Mammary epithelial cell (primary cell): ENCODE measurements at regions of chr11 and their contacts with region 1.

Region 1: DNA sequence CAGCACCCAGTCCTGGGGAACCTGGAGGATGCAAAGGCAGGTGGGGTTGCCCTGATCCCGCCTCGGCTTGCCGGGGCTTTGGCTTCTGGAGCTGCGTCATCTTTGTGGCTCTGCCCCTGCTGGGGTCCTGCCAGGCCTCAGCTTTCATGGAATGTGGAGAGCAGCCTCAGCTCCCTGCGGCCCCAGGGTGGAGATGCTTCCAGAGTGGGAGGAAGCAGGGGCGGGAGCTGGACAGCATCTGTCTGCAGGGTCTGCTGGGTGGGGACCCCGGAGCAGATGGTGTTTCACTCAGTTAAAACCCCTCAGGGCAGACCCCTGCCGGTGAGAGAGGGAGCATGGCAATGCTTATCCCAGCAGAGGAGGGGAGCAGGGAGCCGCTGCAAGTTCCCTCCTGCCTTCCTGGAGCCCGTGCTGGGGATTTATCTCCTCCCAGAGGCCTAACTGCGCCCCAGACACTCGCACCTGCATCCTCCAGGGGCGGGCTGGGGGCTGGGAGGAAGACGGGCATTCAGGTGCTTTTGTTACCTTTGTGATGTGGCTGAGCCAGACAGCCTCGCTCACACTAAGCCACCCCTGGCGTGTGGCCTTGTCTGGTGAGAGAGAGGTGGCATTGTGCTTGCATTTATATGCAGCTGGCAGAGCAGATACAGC is 15.7 kb downstream of the GRIK4 start:
- DNase-seq: no peak
- H3K4me3 ChIP-seq: no peak overlapping the region
- H3K27ac ChIP-seq: no peak overlapping the region
- H3K4me1 ChIP-seq: no peaks in the 10 kb centered on the region
- H3K27me3 ChIP-seq: peaks cover 4% of the 10 kb centered on the region
- CTCF ChIP-seq: no peak

Region 2: GRCh38 chr11:120363436-120363835 is 163.8 kb before region 1 on chr11:
- CTCF ChIA-PET with region 1: no interaction called
- dilution Hi-C with region 1: no loop called
- in situ Hi-C with region 1: no loop called
- intact Hi-C with region 1: no loop called
- DNase-seq: no peak
- H3K4me3 ChIP-seq: no peak overlapping the region
- H3K27ac ChIP-seq: no peak overlapping the region
- H3K4me1 ChIP-seq: no peaks in the 10 kb centered on the region
- H3K27me3 ChIP-seq: no peaks in the 10 kb centered on the region
- CTCF ChIP-seq: no peak

Region 3: DNA sequence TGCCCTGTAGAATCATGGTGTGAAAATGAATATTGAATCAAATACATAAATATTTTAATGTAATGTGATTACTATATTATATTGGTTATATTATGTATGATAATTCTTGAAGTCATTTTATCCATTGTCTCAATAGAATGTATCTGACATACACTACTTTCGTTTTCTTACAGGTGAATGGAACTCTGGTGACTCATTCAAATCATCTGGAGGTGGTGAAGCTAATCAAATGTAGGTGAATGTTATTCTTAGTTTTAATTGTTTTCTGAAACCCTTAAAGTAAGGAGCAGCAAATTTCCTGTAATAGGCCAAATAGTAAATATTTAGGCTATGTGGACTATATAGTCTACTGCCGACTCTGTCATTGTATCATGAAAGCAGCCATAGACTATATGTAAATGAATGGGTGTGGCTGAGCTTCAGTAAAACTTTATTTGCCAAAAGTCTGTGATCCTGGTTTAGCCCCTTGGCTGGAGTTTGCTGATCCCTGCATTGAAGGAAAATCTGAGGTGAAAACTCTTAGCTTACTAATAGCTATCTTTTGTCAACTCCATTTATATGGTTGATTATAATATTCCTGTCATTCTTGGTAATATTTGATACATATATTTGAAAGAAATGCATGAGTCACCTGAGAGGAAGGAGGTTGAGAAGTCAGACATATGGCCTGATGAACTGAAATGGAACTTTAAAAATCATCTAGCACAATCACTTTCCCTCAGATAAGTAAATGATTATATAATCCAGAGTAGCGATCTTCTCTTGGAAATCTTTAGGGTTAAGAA is 102.9 kb before region 1 on chr11:
- CTCF ChIA-PET with region 1: no interaction called
- dilution Hi-C with region 1: no loop called
- in situ Hi-C with region 1: no loop called
- intact Hi-C with region 1: no loop called
- DNase-seq: peak; percentile 26
- H3K4me3 ChIP-seq: no peak overlapping the region
- H3K27ac ChIP-seq: no peak overlapping the region
- H3K4me1 ChIP-seq: peaks cover 10% of the 10 kb centered on the region
- H3K27me3 ChIP-seq: no peaks in the 10 kb centered on the region
- CTCF ChIP-seq: no peak

Region 4: DNA sequence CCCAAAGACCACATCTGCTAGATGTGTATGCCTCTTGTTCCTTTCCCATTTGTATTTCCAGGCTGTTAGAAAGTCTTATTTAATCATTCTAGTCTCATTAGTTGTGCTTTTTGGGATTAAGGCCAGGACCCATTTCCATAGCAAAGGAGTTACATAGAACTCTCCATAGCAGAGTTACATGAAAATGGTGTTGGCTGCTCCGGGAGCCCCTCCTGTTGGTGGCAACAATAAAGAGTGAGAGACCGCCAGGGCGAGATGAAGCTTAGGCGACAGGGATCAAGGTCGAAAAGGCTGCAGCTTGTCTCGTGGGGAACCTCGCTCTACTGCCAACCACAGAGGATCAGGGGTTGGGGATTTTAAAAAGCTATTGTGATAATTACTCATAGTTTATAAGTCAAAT is 42.6 kb after region 1 on chr11:
- CTCF ChIA-PET with region 1: no interaction called
- dilution Hi-C with region 1: loop called (anchors 5 kb)
- in situ Hi-C with region 1: no loop called
- intact Hi-C with region 1: no loop called
- DNase-seq: no peak
- H3K4me3 ChIP-seq: no peak overlapping the region
- H3K27ac ChIP-seq: no peak overlapping the region
- H3K4me1 ChIP-seq: peaks cover 17% of the 10 kb centered on the region
- H3K27me3 ChIP-seq: no peaks in the 10 kb centered on the region
- CTCF ChIP-seq: no peak